A549 (cell line): ENCODE measurements at regions of chr1 and their contacts with region 1.

Region 1: DNA sequence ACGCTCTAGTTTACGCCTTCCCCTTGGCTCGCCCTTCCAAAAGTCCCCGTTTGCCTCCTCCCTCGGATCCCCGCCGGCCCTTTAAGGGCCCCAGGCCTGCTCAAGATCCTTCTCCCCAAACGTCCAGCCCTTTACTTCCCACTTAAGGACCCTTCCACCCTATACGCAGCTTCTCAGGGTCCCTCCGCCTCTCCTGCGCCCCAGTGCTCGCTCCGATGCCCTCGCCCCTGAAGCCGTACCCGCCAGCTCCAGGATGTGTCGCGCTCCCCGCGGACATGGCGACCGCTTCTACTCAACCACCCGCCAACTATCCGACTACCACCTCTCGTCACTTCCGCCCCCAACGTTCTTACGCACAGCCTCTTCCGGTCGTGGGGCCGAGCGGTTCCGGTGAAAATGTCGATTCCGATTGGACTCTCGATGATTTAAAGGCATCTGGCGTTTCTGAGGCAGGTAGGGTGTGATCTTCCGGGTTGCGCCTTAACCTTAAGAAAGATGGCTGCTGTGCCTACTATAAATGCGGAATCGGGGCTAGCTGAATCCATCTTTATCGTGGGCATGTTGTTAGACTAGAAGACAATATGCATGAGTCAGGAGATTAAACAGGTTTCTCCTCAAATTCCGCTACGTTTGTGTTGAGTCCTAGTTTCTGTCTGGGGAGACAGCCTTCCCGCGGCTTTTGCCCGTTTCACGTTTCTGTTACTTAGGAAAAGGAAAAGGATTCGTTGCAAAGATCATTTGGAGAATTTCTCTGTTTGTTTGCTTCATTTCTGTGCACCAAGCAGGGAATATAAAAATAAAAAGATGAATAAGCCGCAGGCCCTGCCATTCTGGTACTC is at the start of gene KHDC4:
- DNase-seq: peak; percentile 97 to 99
- ATAC-seq: peak; percentile 94 to 97
- H3K4me3 ChIP-seq: peak within 1 kb of the TSS; percentile 81
- H3K27ac ChIP-seq: peak within 1 kb of the TSS; percentile 91 to 94
- H3K4me1 ChIP-seq: peaks cover 42% of the 10 kb centered on the region
- CTCF ChIP-seq: no peak
- EP300 ChIP-seq: no peak
- POLR2A ChIP-seq: peak; percentile 94
- RAD21 ChIP-seq: no peak
- polyA plus RNA-seq, gene KHDC4: 69.9 and 72.3 TPM in 2 replicates

Region 2: DNA sequence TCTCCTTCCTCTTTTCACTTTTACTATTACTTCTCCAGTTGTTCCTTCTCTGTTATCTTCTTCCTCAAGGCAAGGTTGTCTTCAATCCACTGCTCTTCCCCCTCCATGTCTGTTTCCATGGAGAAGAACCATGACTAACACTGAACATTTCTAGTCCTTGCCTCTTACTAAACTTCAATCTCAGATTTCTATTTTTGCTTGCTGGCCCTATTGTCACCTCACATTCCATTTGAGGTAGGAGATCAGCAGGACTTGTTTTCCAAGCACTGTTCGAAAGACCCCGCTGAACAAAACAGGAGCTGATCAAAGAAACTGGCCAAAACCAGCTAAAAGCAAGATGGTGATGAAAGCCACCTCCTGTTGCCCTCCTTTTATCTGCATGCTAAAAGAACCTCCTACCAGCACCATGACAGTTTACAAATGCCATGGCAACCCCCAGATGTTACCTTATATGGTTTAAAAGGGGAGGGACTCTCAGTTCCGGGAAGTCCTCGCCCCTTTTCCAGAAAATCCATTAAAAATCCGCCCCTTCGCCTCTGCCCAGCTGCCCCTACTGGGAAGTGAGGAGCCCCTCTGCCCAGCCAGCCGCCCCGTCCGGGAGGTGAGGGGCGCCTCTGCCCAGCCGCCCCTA is 99.9 kb before region 1 on chr1:
- CTCF ChIA-PET with region 1: no interaction called
- POLR2A ChIA-PET with region 1: no interaction called
- DNase-seq: peak in 1 of 2 experiments; percentile 29
- ATAC-seq: peak; percentile 66 to 78; a peak in 5 of 6 replicates
- H3K4me3 ChIP-seq: no peak overlapping the region
- H3K27ac ChIP-seq: no peak overlapping the region
- H3K4me1 ChIP-seq: peaks cover 7% of the 10 kb centered on the region; the same call in 2 of the 3 replicates
- CTCF ChIP-seq: no peak
- EP300 ChIP-seq: no peak
- POLR2A ChIP-seq: no peak
- RAD21 ChIP-seq: no peak

Region 3: DNA sequence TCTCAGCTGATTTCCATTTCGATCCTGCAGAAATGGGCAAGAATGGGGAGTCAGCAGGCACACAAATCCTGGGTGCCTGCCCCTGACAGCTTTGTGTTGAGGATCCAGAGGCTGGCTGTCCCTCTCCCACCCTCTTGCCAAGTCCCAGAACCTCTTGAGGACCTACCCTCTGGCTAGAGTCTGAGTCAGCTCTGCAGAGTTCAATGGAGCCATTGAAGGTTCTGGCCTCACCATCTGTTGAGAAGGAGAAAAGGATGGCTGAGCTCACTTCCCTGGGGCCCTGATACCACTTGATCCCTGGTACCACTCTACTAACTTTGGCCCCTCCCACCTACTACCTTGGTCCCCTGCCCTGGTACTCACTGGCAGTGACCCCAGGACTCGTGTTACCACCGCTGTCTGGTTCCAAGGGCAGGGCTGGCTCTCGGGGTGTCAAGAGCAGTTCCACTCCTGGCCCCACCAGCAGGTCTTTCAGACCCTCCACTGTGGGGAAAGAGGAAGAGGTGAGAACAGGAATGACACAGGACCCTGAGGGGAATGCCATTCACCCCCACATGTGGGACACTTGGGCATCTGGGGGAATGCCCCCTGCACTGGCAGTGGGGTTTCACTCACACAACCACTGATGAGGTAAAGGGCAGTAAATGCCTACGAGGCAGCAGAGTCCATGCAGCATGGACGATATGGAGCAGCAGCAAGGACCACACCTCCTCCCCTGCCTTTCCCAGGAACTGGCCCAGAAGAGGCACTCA is 17.6 kb after region 1 on chr1:
- CTCF ChIA-PET with region 1: interaction called, 41 read pairs
- POLR2A ChIA-PET with region 1: interaction called, 6 read pairs
- DNase-seq: no peak
- ATAC-seq: no peak
- H3K4me3 ChIP-seq: no peak overlapping the region
- H3K27ac ChIP-seq: no peak overlapping the region
- H3K4me1 ChIP-seq: peaks cover 5% of the 10 kb centered on the region; the same call in 2 of the 3 replicates
- CTCF ChIP-seq: no peak
- EP300 ChIP-seq: no peak
- POLR2A ChIP-seq: no peak
- RAD21 ChIP-seq: no peak

Region 4: DNA sequence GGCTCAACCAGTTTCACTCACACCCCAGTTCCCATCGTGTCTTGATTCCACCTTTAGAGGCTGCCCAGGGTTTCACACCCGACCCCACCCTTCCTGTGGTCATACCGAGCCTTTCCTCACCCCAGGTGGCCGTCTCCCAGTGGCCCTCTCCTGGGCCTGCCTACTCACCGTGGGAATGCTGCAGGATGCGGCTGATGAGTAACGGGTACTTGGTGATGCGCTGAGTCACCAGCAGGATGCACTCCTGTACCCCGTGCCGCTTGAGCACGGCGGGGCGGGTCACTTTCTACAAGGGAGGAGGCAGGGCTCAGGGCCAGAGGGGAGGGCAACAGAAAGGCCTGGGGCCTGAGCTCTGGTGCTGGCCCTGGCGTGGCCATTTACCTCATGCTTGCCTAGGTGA is 27.6 kb after region 1 on chr1:
- CTCF ChIA-PET with region 1: interaction called, 30 read pairs
- POLR2A ChIA-PET with region 1: interaction called, 6 read pairs
- DNase-seq: peak; percentile 96 to 98
- ATAC-seq: peak; percentile 97 to 99
- H3K4me3 ChIP-seq: peak overlapping the region; percentile 17; the same call in 1 of the 3 replicates
- H3K27ac ChIP-seq: peak overlapping the region; percentile 91 to 95
- H3K4me1 ChIP-seq: peaks cover 39% of the 10 kb centered on the region
- CTCF ChIP-seq: peak; percentile 43
- EP300 ChIP-seq: peak in 1 of 2 experiments; percentile 19; a peak in 1 of 5 replicates
- POLR2A ChIP-seq: no peak
- RAD21 ChIP-seq: peak; percentile 63 to 69; a peak in 4 of 5 replicates

Region 5: DNA sequence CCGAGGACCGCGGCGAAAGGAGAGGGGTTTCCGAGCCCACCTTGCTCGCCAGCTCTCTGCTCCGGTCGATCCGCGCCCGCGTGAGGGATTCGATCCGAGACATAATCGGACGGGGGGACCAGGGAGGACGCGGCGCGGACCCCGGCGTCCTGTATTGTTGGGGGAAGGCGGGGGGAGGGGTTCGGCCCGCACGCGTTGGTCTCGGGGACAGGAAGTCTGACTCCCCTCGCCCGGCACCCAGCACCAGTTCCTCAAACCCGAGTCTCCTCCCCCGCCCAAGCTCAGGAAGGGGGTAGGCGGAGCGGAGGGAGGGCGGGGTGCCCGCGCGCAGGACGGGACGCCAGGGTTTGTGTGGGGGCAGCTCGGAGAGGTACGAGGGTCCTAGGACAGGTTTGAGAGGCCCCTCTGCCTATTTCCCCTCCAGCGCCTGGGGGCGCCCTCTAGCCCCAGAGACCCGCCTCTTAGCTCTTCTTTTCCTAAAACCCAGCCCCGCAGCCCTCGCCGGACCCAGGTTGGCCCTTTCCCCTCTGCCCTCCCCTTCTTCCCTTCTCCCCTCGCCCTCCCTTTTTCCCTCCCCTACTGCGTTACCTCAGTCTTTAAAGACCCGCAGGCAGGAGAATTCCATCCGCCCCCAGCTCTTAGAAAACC is 44.1 kb after region 1 on chr1 and contains the start of gene ARHGEF2:
- CTCF ChIA-PET with region 1: interaction called, 423 read pairs
- POLR2A ChIA-PET with region 1: interaction called, 10 read pairs
- DNase-seq: peak; percentile 80 to 89
- ATAC-seq: peak; percentile 64 to 85
- H3K4me3 ChIP-seq: peak within 1 kb of the TSS; percentile 90
- H3K27ac ChIP-seq: peak within 1 kb of the TSS; percentile 98 to 99
- H3K4me1 ChIP-seq: peaks cover 76% of the 10 kb centered on the region
- CTCF ChIP-seq: peak; percentile 23; the same call in 2 of the 3 replicates
- EP300 ChIP-seq: no peak
- POLR2A ChIP-seq: peak; percentile 69
- RAD21 ChIP-seq: no peak
- polyA plus RNA-seq, gene ARHGEF2: 67.4 and 69.1 TPM in 2 replicates

Region 6: GRCh38 chr1:156001682-156002171 is 67.4 kb after region 1 on chr1:
- CTCF ChIA-PET with region 1: interaction called, 423 read pairs
- POLR2A ChIA-PET with region 1: interaction called, 4 read pairs
- DNase-seq: no peak
- ATAC-seq: peak; percentile 14 to 36; a peak in 3 of 6 replicates
- H3K4me3 ChIP-seq: 0 out of 3 replicates have a peak overlapping the region, but pooled peaks have one; percentile 17
- H3K27ac ChIP-seq: peak overlapping the region; percentile 68 to 85
- H3K4me1 ChIP-seq: peaks cover 39% of the 10 kb centered on the region
- CTCF ChIP-seq: no peak
- EP300 ChIP-seq: no peak
- POLR2A ChIP-seq: no peak
- RAD21 ChIP-seq: peak; percentile 25 to 35; a peak in 2 of 5 replicates

Region 7: DNA sequence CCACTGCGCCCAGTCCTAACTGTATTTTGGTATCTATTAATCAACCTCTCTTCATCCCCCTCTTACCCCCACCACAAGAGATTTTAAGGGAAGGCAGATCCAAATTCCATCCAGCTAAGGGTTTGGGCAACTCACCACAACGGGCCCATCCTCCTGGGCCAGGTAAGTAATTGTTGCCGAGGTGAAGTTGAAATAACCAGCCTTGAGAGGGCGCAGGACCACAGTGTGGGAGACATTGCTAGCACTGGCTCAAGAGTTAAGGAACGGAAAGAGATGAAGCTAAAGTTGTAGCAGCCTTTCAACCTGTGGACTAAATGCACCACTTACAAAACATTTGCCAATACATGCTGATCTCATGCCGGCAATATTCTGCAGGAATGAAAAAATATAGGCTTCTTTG is 80.5 kb after region 1 on chr1:
- CTCF ChIA-PET with region 1: interaction called, 12 read pairs
- POLR2A ChIA-PET with region 1: no interaction called
- DNase-seq: no peak
- ATAC-seq: no peak
- H3K4me3 ChIP-seq: no peak overlapping the region
- H3K27ac ChIP-seq: no peak overlapping the region
- H3K4me1 ChIP-seq: peaks cover 8% of the 10 kb centered on the region; the same call in 1 of the 3 replicates
- CTCF ChIP-seq: no peak
- EP300 ChIP-seq: no peak
- POLR2A ChIP-seq: no peak
- RAD21 ChIP-seq: no peak

Region 8: GRCh38 chr1:156070548-156070947 is 136.2 kb after region 1 on chr1:
- CTCF ChIA-PET with region 1: interaction called, 34 read pairs
- POLR2A ChIA-PET with region 1: no interaction called
- DNase-seq: no peak
- ATAC-seq: no peak
- H3K4me3 ChIP-seq: no peak overlapping the region
- H3K27ac ChIP-seq: peak overlapping the region in 1 of 2 experiments; percentile 21; a peak in 2 of 6 replicates
- H3K4me1 ChIP-seq: no peaks in the 10 kb centered on the region; the same call in 2 of the 3 replicates
- CTCF ChIP-seq: no peak
- EP300 ChIP-seq: no peak
- POLR2A ChIP-seq: no peak
- RAD21 ChIP-seq: no peak

Region 9: GRCh38 chr1:156233426-156234127 is 299.3 kb after region 1 on chr1:
- CTCF ChIA-PET with region 1: no interaction called
- POLR2A ChIA-PET with region 1: no interaction called
- DNase-seq: no peak
- ATAC-seq: peak in 1 of 2 experiments; percentile 33; a peak in 3 of 6 replicates
- H3K4me3 ChIP-seq: no peak overlapping the region
- H3K27ac ChIP-seq: peak overlapping the region in 1 of 2 experiments; percentile 52; a peak in 1 of 6 replicates
- H3K4me1 ChIP-seq: peaks cover 14% of the 10 kb centered on the region
- CTCF ChIP-seq: no peak
- EP300 ChIP-seq: no peak
- POLR2A ChIP-seq: no peak
- RAD21 ChIP-seq: no peak